Heart left ventricle (tissue), 16 donors: ENCODE measurements at regions of chr10 and their contacts with region 1.

Region 1: GRCh38 chr10:26556748-26557640 is 118.9 kb downstream of the APBB1IP start:
- DNase-seq: no peak
- ATAC-seq: peak in 3 of 4 donors; percentile 50 to 72 (median 66)
- H3K4me3 ChIP-seq: no peak overlapping the region
- H3K27ac ChIP-seq: no peak overlapping the region
- H3K4me1 ChIP-seq: peaks cover 0 to 29% (median 0%) of the 10 kb centered on the region in 12 donors
- H3K27me3 ChIP-seq: peaks cover 0 to 40% (median 0%) of the 10 kb centered on the region in 9 donors
- CTCF ChIP-seq: peak; percentile 45 to 85 (median 78)
- POLR2A ChIP-seq: no peak

Region 2: DNA sequence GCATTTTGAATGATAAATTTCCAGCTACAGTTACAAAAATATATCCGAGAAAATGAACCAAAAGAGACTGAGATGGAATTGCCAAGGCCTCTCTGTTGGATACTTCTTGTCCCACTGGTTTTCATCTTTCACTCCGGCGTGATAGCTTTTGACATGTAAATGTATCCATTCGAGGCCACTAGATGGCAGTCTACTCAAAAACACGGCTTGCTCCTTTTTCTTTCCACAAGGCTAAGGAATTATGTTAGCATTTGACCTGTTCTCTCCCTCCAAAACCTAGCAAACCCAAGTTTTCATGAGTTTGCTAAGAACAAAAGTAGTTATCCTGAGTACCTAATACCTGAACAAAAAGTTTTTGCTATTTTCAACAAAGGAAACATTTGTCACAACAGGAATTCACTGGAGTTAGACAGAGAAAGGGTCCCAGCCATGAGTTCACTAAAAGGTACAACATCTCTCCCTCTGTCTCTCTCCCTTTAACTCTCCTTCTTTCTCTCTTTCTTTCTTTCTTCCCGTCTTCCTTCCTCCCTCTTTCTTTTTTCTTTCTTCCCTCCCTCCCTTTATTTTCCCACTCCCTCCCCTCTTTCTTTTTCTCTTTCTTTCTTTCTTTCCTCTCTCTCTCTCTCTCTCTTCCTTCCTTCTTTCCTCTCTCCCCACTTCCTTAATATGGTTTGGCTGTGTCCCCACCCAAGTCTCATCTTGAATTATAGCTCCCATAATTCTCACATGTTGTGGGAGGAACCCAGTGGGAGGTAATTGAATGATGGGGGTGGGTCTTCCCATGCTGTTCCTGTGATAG is 830.9 kb before region 1 on chr10:
- intact Hi-C with region 1: loop called in 5 of 10 experiments (anchors 5 to 10 kb)
- DNase-seq: peak in 1 of 5 donors; percentile 10
- ATAC-seq: peak in 1 of 4 donors; percentile 46
- H3K4me3 ChIP-seq: no peak overlapping the region
- H3K27ac ChIP-seq: no peak overlapping the region
- H3K4me1 ChIP-seq: no peaks in the 10 kb centered on the region
- H3K27me3 ChIP-seq: peaks cover 0 to 14% (median 0%) of the 10 kb centered on the region in 9 donors
- CTCF ChIP-seq: peak; percentile 52 to 75 (median 67)
- POLR2A ChIP-seq: no peak

Region 3: GRCh38 chr10:25875556-25876165 is 681.3 kb before region 1 on chr10:
- intact Hi-C with region 1: loop called (anchors 2 to 10 kb)
- DNase-seq: peak; percentile 41 to 69 (median 61)
- ATAC-seq: peak in 1 of 4 donors; percentile 59
- H3K4me3 ChIP-seq: no peak overlapping the region
- H3K27ac ChIP-seq: no peak overlapping the region
- H3K4me1 ChIP-seq: no peaks in the 10 kb centered on the region
- H3K27me3 ChIP-seq: peaks cover 0 to 7% (median 0%) of the 10 kb centered on the region in 9 donors
- CTCF ChIP-seq: peak; percentile 73 to 86 (median 82)
- POLR2A ChIP-seq: no peak

Region 4: GRCh38 chr10:26334932-26335573 is 221.9 kb before region 1 on chr10:
- intact Hi-C with region 1: loop called (anchors 1 to 5 kb)
- DNase-seq: peak in 4 of 5 donors; percentile 19 to 33 (median 26)
- ATAC-seq: peak; percentile 48 to 79 (median 56)
- H3K4me3 ChIP-seq: peak overlapping the region in 3 of 12 donors; percentile 26 to 49 (median 32)
- H3K27ac ChIP-seq: no peak overlapping the region
- H3K4me1 ChIP-seq: no peaks in the 10 kb centered on the region
- H3K27me3 ChIP-seq: no peaks in the 10 kb centered on the region
- CTCF ChIP-seq: peak; percentile 32 to 71 (median 58)
- POLR2A ChIP-seq: no peak

Region 5: GRCh38 chr10:27713927-27714326 is 1156.9 kb after region 1 on chr10:
- intact Hi-C with region 1: no loop called
- DNase-seq: no peak
- ATAC-seq: peak in 3 of 4 donors; percentile 50 to 75 (median 72)
- H3K4me3 ChIP-seq: peak overlapping the region in 3 of 12 donors; percentile 2 to 24 (median 7)
- H3K27ac ChIP-seq: peak overlapping the region in 4 of 12 donors; percentile 10 to 43 (median 18)
- H3K4me1 ChIP-seq: peaks cover 0 to 14% (median 5%) of the 10 kb centered on the region in 12 donors
- H3K27me3 ChIP-seq: no peaks in the 10 kb centered on the region
- CTCF ChIP-seq: no peak
- POLR2A ChIP-seq: no peak